Activated CD8-positive, alpha-beta memory T cell treated with anti-CD3 and anti-CD28 coated beads, Interleukin-2, amount 10 ng/mL, durations not matched to agents 7 days and 5 days (primary cell): ENCODE measurements at regions of chr16 and their contacts with region 1.

Region 1: DNA sequence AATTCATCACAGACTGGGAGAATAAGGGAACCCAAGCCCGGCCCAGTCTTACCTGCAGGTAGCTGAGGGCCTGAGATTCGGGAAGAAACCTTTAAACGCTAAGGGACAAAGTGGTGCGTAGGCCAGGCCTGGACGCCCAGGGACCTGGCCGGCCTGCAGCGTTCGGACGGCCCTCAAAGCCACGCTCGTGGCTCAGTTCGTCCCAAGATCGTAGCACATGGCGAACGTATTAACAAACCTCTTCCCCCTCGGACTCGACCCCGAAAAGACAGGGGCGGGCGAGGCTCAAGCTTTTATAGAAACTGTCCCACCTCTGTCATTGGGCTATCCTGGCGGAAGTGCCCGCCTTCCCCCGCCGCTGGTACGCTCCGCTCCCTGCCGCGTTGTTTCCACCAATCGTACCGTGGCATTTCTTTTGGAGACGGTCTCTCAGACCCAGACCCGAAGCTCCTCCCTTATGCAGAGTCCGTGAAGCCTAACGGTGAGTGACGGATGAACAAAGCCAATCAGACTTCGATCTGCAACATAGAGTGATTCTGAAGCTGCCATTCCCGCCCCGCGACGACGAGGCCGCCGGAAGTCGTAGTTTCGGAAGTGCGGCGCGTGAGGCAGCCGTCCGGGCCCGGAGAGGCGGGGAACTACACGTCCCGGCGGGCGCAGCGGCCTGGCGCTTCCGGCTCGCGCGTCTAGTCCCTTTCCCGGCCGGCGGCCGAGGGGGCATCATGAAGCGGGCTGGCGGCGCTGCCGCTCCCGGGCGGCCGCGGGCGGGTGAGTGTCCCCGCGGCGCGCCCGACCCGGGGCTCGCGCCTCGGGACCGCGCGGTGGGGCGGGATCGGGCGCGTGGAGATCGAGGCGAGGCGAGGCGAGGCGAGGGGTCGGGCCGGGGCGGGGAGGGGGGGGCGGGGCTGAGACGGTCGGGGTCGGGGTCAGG is at the start of gene TRAF7:
- DNase-seq: peak; percentile 99
- ATAC-seq: peak; percentile 91
- H3K4me3 Mint-ChIP-seq: peak within 1 kb of the TSS; percentile 96
- H3K27ac Mint-ChIP-seq: peak within 1 kb of the TSS; percentile 93
- H3K4me1 Mint-ChIP-seq: peaks cover 40% of the 10 kb centered on the region
- H3K27me3 Mint-ChIP-seq: no peaks in the 10 kb centered on the region
- total RNA-seq, gene TRAF7: 59.5 to 72.9 TPM

Region 2: GRCh38 chr16:2023098-2023925 is 132.0 kb before region 1 on chr16:
- CTCF ChIA-PET with region 1: interaction called, 28 read pairs
- DNase-seq: peak; percentile 95
- ATAC-seq: peak; percentile 82
- H3K4me3 Mint-ChIP-seq: peak overlapping the region; percentile 56
- H3K27ac Mint-ChIP-seq: peak overlapping the region; percentile 64
- H3K4me1 Mint-ChIP-seq: peaks cover 17% of the 10 kb centered on the region
- H3K27me3 Mint-ChIP-seq: peaks cover 44% of the 10 kb centered on the region

Region 3: DNA sequence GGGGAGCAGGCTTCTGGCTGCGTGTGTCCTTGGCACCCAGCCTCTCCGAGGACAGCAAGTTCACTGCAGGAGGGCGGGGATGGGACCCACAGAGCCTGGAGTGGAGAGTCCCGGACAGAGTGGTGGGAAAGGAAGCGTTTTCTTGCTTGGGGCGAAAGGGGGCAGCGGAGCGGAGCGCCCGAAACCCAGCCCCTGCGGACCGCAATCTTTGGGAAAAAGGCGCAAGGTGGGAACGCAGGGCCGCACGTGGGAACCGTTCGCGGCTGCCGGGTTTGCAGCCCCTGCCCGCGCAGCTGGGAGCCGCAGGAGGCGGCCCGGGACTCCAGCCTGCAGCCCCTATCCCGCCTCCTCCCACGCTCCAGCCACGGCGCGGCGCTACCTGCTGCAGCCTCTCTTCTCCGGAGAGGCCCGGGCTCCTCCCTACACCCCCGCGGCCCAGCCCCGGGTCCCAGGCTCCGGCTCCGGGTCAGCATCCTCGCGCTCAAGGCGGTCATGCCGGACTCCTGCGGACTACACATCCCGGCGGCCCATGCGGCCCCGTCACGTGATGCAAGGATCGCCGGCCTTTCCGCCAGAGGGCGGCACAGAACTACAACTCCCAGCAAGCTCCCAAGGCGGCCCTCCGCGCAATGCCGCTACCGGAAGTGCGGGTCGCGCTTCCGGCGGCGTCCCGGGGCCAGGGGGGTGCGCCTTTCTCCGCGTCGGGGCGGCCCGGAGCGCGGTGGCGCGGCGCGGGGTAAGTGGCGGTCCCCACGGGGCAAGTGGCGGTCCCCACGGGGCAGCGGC is 107.8 kb before region 1 on chr16 and contains the starts of genes NTHL1 and TSC2:
- CTCF ChIA-PET with region 1: interaction called, 12 read pairs
- DNase-seq: peak; percentile 97
- ATAC-seq: peak; percentile 93
- H3K4me3 Mint-ChIP-seq: peak within 1 kb of the TSS; percentile 89
- H3K27ac Mint-ChIP-seq: peak within 1 kb of the TSS; percentile 85
- H3K4me1 Mint-ChIP-seq: peaks cover 21% of the 10 kb centered on the region
- H3K27me3 Mint-ChIP-seq: no peaks in the 10 kb centered on the region
- total RNA-seq, gene NTHL1: 34.3 to 37.5 TPM
- total RNA-seq, gene TSC2: 101 to 115 TPM

Region 4: GRCh38 chr16:2251483-2252240 is 96.3 kb after region 1 on chr16 and contains the start of gene ECI1:
- CTCF ChIA-PET with region 1: interaction called, 20 read pairs
- DNase-seq: peak; percentile 93
- ATAC-seq: peak; percentile 92
- H3K4me3 Mint-ChIP-seq: peak within 1 kb of the TSS; percentile 89
- H3K27ac Mint-ChIP-seq: peak within 1 kb of the TSS; percentile 91
- H3K4me1 Mint-ChIP-seq: peaks cover 11% of the 10 kb centered on the region
- H3K27me3 Mint-ChIP-seq: no peaks in the 10 kb centered on the region
- total RNA-seq, gene ECI1: 48.9 to 57.3 TPM